SK-N-SH (cell line): ENCODE measurements at regions of chr3 and their contacts with region 1.

Region 1: DNA sequence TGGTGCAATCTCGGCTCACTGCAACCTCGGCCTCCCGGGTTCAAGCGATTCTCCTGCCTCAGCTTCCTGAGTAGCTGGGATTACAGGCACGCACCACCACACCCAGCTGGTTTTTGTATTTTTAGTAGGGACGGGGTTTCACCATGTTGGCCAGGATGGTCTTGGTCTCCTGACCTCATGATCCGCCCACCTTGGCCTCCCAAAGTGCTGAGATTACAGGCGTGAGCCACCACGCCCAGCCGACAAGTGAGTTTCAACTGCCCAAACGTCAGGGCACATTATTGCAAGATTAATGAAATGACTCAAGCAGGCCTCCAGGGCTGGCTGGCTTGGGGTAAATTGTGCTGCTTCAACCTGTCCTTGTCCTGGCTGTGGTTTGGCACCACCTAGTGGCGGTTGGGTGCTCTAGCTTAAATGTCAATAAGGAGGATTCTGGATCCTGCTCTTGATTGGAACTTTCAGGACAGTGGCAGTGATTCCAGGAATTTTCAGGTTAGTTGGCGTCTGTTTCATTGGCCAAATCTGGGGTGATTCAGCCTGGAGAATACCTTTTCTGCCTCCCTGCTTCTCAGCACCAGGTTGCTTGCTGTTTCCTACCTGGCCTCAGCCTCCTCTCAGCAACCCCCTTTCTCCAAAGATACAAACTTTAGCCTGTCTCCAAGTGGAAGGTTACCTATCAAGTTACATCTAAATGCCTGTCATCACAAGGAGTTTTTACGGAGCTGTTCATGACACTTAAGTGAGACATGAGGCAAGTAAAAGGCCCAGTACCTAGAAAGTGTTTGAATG is 32.4 kb upstream of the SACM1L start:
- DNase-seq: peak; percentile 82
- H3K4me3 ChIP-seq: no peak overlapping the region; a peak in 1 of 4 replicates
- H3K27ac ChIP-seq: peak overlapping the region in 1 of 2 experiments; percentile 48; a peak in 2 of 4 replicates
- H3K4me1 ChIP-seq: peaks cover 0 to 8% of the 10 kb centered on the region in 2 experiments; a peak in 3 of 4 replicates
- H3K27me3 ChIP-seq: no peaks in the 10 kb centered on the region
- CTCF ChIP-seq: peak; percentile 94
- EP300 ChIP-seq: no peak
- RAD21 ChIP-seq: peak; percentile 96

Region 2: DNA sequence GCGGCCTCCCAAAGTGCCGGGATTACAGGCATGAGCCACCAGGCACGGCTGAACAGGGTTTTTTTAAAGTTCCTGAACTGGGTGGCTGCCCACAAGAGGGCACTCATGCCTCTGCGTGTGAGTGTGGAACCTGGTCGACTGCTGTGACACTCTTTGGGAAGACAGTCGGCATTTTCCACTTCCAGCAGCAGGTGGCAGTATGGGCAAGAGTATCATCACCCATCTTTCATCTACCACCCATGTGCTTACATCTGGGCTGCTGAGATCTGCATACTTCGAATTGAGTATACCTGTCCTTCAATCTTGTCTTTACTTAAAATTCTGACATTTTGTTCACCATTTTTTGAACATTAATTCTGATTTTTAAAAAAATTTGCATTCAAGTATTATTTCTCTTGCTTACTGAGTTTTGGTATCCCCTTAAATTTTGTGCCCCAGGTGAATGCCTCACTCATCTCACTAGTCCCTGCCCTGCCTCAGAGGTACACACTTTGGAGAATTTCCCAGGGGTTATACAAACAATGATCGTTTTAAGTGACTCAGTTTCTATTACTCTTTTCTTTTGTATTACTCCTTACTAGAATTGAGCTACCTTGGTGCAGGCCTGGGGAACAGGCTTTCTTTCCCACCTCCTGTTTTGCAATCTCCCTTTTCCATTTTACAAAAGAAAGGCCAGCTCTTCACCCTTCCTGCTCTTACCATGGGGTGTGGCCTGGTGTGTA is 618.9 kb before region 1 on chr3:
- CTCF ChIA-PET with region 1: interaction called, 20 read pairs
- POLR2A ChIA-PET with region 1: no interaction called
- DNase-seq: peak; percentile 90
- H3K4me3 ChIP-seq: peak overlapping the region in 1 of 2 experiments; percentile 32; a peak in 1 of 4 replicates
- H3K27ac ChIP-seq: no peak overlapping the region
- H3K4me1 ChIP-seq: no peaks in the 10 kb centered on the region; a peak in 1 of 4 replicates
- H3K27me3 ChIP-seq: no peaks in the 10 kb centered on the region
- CTCF ChIP-seq: peak; percentile 98
- EP300 ChIP-seq: no peak
- RAD21 ChIP-seq: peak; percentile 96

Region 3: DNA sequence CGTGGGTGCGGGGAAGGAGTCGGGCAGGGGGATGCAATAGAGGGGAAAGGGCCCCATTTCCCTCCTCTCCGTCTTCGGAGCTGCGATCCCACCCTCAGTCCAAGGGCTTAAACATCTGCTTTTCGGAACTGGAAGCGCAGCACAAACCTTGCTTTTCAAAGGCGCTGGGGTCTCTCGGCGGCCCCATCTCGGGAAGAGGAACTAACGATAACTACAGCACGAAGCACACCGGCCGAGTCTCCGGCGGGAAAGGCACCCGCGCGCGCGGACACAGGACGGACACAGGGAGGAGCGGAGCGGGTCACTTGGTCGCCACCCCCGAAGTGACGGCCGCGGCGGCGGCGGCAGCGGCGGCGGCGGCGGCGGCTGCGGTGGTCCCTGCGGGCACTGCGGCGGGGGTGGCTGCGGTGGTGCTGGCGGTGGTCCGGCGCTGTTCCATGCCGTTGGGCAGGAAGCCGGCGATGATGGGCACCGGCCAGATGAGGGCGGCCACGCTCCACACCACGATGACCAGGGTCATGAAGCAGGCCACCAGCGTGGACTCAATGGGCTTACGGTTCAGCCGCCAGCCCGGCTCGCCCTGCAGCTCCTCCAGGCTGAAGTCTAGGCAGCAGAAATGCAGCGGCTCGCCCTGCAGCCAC is 431.8 kb before region 1 on chr3:
- CTCF ChIA-PET with region 1: interaction called, 16 read pairs
- POLR2A ChIA-PET with region 1: no interaction called
- DNase-seq: peak; percentile 95
- H3K4me3 ChIP-seq: peak overlapping the region; percentile 68 to 86
- H3K27ac ChIP-seq: peak overlapping the region in 1 of 2 experiments; percentile 71; a peak in 2 of 4 replicates
- H3K4me1 ChIP-seq: peaks cover 0 to 7% of the 10 kb centered on the region in 2 experiments; a peak in 3 of 4 replicates
- H3K27me3 ChIP-seq: no peaks in the 10 kb centered on the region
- CTCF ChIP-seq: peak; percentile 59
- EP300 ChIP-seq: 0 out of 4 replicates have a peak, but pooled peaks of 1 of the 2 experiments have one; percentile 19
- RAD21 ChIP-seq: peak; percentile 88

Region 4: GRCh38 chr3:45272828-45273470 is 383.8 kb before region 1 on chr3:
- CTCF ChIA-PET with region 1: no interaction called
- POLR2A ChIA-PET with region 1: no interaction called
- DNase-seq: no peak
- H3K4me3 ChIP-seq: no peak overlapping the region
- H3K27ac ChIP-seq: no peak overlapping the region
- H3K4me1 ChIP-seq: no peaks in the 10 kb centered on the region
- H3K27me3 ChIP-seq: no peaks in the 10 kb centered on the region
- CTCF ChIP-seq: no peak
- EP300 ChIP-seq: no peak
- RAD21 ChIP-seq: no peak

Region 5: GRCh38 chr3:45516829-45517228 is 139.9 kb before region 1 on chr3:
- CTCF ChIA-PET with region 1: interaction called, 135 read pairs
- POLR2A ChIA-PET with region 1: interaction called, 3 read pairs
- DNase-seq: no peak
- H3K4me3 ChIP-seq: no peak overlapping the region
- H3K27ac ChIP-seq: no peak overlapping the region
- H3K4me1 ChIP-seq: no peaks in the 10 kb centered on the region; a peak in 1 of 4 replicates
- H3K27me3 ChIP-seq: no peaks in the 10 kb centered on the region
- CTCF ChIP-seq: no peak
- EP300 ChIP-seq: no peak
- RAD21 ChIP-seq: no peak

Region 6: DNA sequence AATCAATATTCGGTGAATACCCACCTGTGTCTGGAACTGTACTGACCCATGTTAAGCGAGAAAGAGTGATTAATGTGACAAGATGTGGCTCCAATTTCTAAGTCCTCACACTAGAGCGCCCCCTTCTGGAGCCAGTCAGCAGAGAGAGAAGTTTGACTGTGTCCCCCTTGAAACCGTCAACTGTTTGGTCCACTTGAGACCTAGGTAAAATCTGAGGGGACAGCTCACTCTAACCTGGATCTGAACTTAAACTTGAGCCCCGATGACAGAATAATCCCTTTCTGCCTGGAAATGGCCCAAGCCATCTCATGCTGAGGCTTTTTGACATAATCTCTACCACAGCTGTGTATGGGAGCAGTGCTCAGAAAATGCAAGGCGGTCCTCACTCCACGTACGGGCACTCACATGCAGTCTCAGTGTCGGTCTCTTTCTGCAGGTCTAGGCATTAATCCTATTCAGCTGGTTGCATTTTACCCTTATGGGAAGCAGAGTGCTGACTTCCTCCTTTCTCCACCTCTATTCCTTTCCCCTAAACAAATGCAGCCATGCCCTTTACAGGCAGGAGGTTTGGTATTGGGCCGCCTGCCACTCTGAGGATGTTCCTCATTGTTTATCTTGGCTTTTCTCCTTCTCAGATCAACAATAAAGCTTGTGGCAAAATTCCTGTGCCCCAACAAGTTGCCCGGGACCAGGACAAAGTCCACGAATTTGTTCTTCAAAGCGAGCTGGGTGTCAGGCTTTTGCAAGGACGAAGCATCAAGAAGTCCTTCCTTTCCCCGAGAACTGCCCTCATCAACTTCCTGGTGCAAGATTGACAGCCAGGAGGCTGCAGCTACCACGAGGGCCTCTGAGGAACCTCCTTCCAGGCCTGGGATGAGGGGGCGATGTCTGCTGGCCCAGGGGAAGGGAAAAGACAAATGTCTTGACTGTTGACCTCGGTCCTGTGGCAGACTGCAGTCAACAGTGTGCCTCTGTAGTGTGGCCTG is 109.8 kb before region 1 on chr3:
- CTCF ChIA-PET with region 1: interaction called, 17 read pairs
- POLR2A ChIA-PET with region 1: no interaction called
- DNase-seq: no peak
- H3K4me3 ChIP-seq: no peak overlapping the region
- H3K27ac ChIP-seq: peak overlapping the region in 1 of 2 experiments; percentile 73; a peak in 2 of 4 replicates
- H3K4me1 ChIP-seq: peaks cover 23 to 24% of the 10 kb centered on the region in 2 experiments; a peak in 3 of 4 replicates
- H3K27me3 ChIP-seq: no peaks in the 10 kb centered on the region
- CTCF ChIP-seq: peak; percentile 52
- EP300 ChIP-seq: no peak
- RAD21 ChIP-seq: no peak

Region 7: GRCh38 chr3:45593708-45594609 is 62.8 kb before region 1 on chr3:
- CTCF ChIA-PET with region 1: interaction called, 37 read pairs
- POLR2A ChIA-PET with region 1: interaction called, 3 read pairs
- DNase-seq: peak; percentile 95
- H3K4me3 ChIP-seq: peak overlapping the region; percentile 78 to 81
- H3K27ac ChIP-seq: peak overlapping the region; percentile 83 to 84
- H3K4me1 ChIP-seq: peaks cover 15 to 38% of the 10 kb centered on the region in 2 experiments
- H3K27me3 ChIP-seq: no peaks in the 10 kb centered on the region
- CTCF ChIP-seq: no peak
- EP300 ChIP-seq: no peak
- RAD21 ChIP-seq: no peak

Region 8: DNA sequence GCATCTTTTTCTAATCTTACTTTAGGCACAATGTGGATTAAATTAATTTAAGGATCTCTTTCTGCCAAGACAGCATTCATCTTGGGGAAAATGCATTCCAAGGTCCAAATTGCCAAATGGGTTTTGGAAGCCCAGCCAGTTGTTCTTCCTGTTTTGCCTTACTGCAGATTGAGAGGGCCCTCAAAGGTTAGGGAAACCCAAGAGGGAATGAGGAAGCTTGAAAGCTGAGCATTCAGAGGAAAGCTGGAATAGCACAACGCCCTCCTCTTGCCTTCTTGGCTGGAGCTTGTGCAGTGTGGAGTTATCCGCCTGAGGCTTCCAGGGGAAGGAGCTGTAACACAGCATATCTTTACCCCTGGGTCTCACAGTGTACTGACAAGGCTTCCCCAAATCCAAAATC is 14.2 kb after region 1 on chr3:
- CTCF ChIA-PET with region 1: interaction called, 33 read pairs
- POLR2A ChIA-PET with region 1: no interaction called
- DNase-seq: no peak
- H3K4me3 ChIP-seq: no peak overlapping the region
- H3K27ac ChIP-seq: no peak overlapping the region; a peak in 1 of 4 replicates
- H3K4me1 ChIP-seq: peaks cover 13 to 21% of the 10 kb centered on the region in 2 experiments; a peak in 3 of 4 replicates
- H3K27me3 ChIP-seq: no peaks in the 10 kb centered on the region
- CTCF ChIP-seq: no peak
- EP300 ChIP-seq: no peak
- RAD21 ChIP-seq: no peak